Caco-2 (cell line): ENCODE measurements at regions of chr9 and their contacts with region 1.

Region 1: GRCh38 chr9:36166101-36166927 is 2.9 kb upstream of the CCIN start:
- DNase-seq: peak; percentile 66 to 85
- H3K4me3 ChIP-seq: no peak overlapping the region; the same call in 1 of the 2 replicates
- H3K4me3 Mint-ChIP-seq: peak overlapping the region; percentile 57
- H3K27ac Mint-ChIP-seq: no peak overlapping the region
- H3K4me1 ChIP-seq: peaks cover 8% of the 10 kb centered on the region
- H3K4me1 Mint-ChIP-seq: no peaks in the 10 kb centered on the region
- H3K27me3 ChIP-seq: no peaks in the 10 kb centered on the region
- H3K27me3 Mint-ChIP-seq: no peaks in the 10 kb centered on the region
- CTCF ChIP-seq: peak; percentile 76 to 84

Region 2: GRCh38 chr9:35945341-35946018 is 220.8 kb before region 1 on chr9:
- CTCF ChIA-PET with region 1: no interaction called
- POLR2A ChIA-PET with region 1: no interaction called
- intact Hi-C with region 1: loop called (anchors 5 kb)
- DNase-seq: peak; percentile 79 to 81
- H3K4me3 ChIP-seq: no peak overlapping the region
- H3K4me3 Mint-ChIP-seq: peak overlapping the region; percentile 57
- H3K27ac Mint-ChIP-seq: peak overlapping the region; percentile 58
- H3K4me1 ChIP-seq: peaks cover 12% of the 10 kb centered on the region; the same call in 1 of the 2 replicates
- H3K4me1 Mint-ChIP-seq: peaks cover 10% of the 10 kb centered on the region
- H3K27me3 ChIP-seq: no peaks in the 10 kb centered on the region
- H3K27me3 Mint-ChIP-seq: no peaks in the 10 kb centered on the region
- CTCF ChIP-seq: peak; percentile 77 to 79

Region 3: DNA sequence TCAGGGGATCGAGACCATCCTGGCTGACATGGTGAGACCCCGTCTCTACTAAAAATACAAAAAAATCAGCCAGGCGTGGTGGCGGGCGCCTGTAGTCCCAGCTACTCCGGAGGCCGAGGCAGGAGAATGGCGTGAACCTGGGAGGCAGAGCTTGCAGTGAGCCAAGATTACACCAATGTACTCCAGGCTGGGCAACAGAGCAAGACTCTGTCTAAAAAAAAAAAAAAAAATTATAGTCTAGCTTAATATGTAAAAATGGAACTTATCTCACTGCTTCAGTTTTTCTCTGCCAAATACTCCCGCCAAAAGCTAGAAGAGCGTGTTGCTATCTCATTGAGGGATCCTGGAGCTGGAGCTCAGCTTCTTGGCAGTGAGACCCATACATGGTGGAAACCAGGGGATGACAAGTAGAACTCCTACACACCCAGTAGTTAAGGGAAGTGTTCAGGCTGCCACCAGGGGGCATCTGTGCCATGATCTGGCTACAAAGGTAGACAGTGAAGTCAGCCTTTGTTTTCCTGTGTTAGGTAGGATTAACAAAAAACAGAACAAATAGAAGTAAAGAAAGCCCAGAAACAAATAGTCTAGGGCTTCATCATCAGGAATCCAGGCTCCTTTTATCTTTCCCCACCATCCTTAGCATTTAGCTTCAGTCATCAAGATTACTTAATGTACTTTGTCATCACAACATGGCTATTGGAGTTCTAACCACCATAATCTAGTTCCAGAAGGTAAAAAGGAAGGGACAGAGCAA is 63.4 kb before region 1 on chr9:
- CTCF ChIA-PET with region 1: interaction called, 6 read pairs
- POLR2A ChIA-PET with region 1: no interaction called
- intact Hi-C with region 1: loop called (anchors 1 kb)
- DNase-seq: peak; percentile 80 to 81
- H3K4me3 ChIP-seq: no peak overlapping the region
- H3K4me3 Mint-ChIP-seq: no peak overlapping the region
- H3K27ac Mint-ChIP-seq: peak overlapping the region; percentile 89
- H3K4me1 ChIP-seq: peaks cover 38% of the 10 kb centered on the region
- H3K4me1 Mint-ChIP-seq: peaks cover 28% of the 10 kb centered on the region
- H3K27me3 ChIP-seq: no peaks in the 10 kb centered on the region
- H3K27me3 Mint-ChIP-seq: no peaks in the 10 kb centered on the region
- CTCF ChIP-seq: peak; percentile 74 to 78

Region 4: DNA sequence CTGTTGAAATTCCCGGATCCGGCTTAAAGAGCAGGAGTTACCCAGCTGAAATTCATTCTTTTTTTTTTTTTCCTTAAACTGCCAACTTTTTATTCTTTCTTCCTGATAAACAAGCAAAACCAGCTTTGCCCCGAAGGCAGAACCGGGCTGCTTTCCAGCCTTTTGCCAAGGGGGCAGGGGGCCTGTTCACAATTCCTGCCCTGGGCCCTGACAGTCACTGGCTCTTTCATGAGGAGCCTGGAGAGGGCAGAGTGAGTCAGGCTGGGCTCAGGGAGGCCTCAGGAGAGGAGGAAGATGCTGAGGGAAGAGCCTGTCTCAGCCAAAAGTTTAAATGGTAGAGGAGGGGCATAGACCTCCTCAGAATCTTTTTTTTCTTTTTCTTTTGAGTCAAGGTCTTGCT is 25.0 kb before region 1 on chr9:
- CTCF ChIA-PET with region 1: interaction called, 4 read pairs
- POLR2A ChIA-PET with region 1: no interaction called
- intact Hi-C with region 1: loop called (anchors 1 kb)
- DNase-seq: no peak
- H3K4me3 ChIP-seq: no peak overlapping the region
- H3K4me3 Mint-ChIP-seq: no peak overlapping the region
- H3K27ac Mint-ChIP-seq: no peak overlapping the region
- H3K4me1 ChIP-seq: 0 out of 2 replicates have a peak, but pooled peaks cover 3% of the 10 kb centered on the region
- H3K4me1 Mint-ChIP-seq: no peaks in the 10 kb centered on the region
- H3K27me3 ChIP-seq: no peaks in the 10 kb centered on the region
- H3K27me3 Mint-ChIP-seq: peaks cover 5% of the 10 kb centered on the region
- CTCF ChIP-seq: no peak